ENCODE measurements at regions of chr1 and their contacts with region 1.

Region 1: GRCh38 chr1:28088168-28088961 is at the start of gene EYA3:
- DNase-seq: peak; percentile 98
- ATAC-seq: peak; percentile 94
- H3K4me3 ChIP-seq: peak within 1 kb of the TSS; percentile 94
- H3K27ac ChIP-seq: peak within 1 kb of the TSS; percentile 93
- H3K4me1 ChIP-seq: peaks cover 17% of the 10 kb centered on the region
- H3K27me3 ChIP-seq: no peaks in the 10 kb centered on the region
- CTCF ChIP-seq: no peak
- EP300 ChIP-seq: no peak
- POLR2A ChIP-seq: peak; percentile 86; the same call in 1 of the 2 replicates
- RAD21 ChIP-seq: no peak
- polyA plus RNA-seq, gene EYA3: 13.0 to 15.6 TPM

Region 2: DNA sequence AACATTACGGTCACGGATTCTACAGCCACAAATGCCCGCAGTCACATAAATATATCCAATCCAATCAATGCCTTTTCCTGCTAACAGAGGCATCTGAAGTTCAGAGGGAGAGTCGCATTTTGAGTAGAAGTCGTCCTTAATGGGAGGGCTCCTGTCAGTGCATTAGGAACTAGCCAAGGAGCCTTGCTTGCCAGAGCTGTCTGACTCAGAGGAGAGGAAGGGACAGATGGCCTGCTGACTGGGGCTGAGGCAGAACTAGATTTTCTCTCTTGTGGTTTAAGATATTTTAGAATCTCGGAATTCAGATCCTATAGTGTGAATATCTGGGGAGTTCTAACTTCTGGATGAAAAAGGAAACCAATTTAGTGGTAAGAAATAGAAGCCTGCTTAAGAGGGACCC is 118.0 kb before region 1 on chr1:
- CTCF ChIA-PET with region 1: no interaction called
- POLR2A ChIA-PET with region 1: no interaction called
- RAD21 ChIA-PET with region 1: no interaction called
- SMC1A ChIA-PET with region 1: no interaction called
- in situ Hi-C with region 1: no loop called
- intact Hi-C with region 1: no loop called
- DNase-seq: no peak
- ATAC-seq: no peak
- H3K4me3 ChIP-seq: no peak overlapping the region
- H3K27ac ChIP-seq: no peak overlapping the region
- H3K4me1 ChIP-seq: no peaks in the 10 kb centered on the region
- H3K27me3 ChIP-seq: no peaks in the 10 kb centered on the region
- CTCF ChIP-seq: no peak
- EP300 ChIP-seq: no peak
- POLR2A ChIP-seq: no peak
- RAD21 ChIP-seq: no peak

Region 3: GRCh38 chr1:28036431-28036830 is 51.9 kb before region 1 on chr1:
- CTCF ChIA-PET with region 1: interaction called, 13 read pairs
- POLR2A ChIA-PET with region 1: interaction called, 3 read pairs
- RAD21 ChIA-PET with region 1: interaction called, 12 read pairs
- SMC1A ChIA-PET with region 1: interaction called, 28 read pairs
- in situ Hi-C with region 1: no loop called
- intact Hi-C with region 1: no loop called
- DNase-seq: no peak
- ATAC-seq: no peak
- H3K4me3 ChIP-seq: no peak overlapping the region
- H3K27ac ChIP-seq: no peak overlapping the region
- H3K4me1 ChIP-seq: no peaks in the 10 kb centered on the region
- H3K27me3 ChIP-seq: no peaks in the 10 kb centered on the region
- CTCF ChIP-seq: peak in 1 of 3 experiments; percentile 49; a peak in 3 of 6 replicates
- EP300 ChIP-seq: no peak
- POLR2A ChIP-seq: no peak
- RAD21 ChIP-seq: peak; percentile 24; the same call in 1 of the 2 replicates

Region 4: GRCh38 chr1:28104866-28105467 is 16.6 kb after region 1 on chr1:
- CTCF ChIA-PET with region 1: interaction called, 57 read pairs
- POLR2A ChIA-PET with region 1: interaction called, 18 read pairs
- RAD21 ChIA-PET with region 1: interaction called, 113 read pairs
- SMC1A ChIA-PET with region 1: interaction called, 16 read pairs
- in situ Hi-C with region 1: no loop called
- intact Hi-C with region 1: no loop called
- DNase-seq: no peak
- ATAC-seq: no peak; the same call in 2 of the 3 replicates
- H3K4me3 ChIP-seq: no peak overlapping the region
- H3K27ac ChIP-seq: no peak overlapping the region
- H3K4me1 ChIP-seq: no peaks in the 10 kb centered on the region
- H3K27me3 ChIP-seq: no peaks in the 10 kb centered on the region
- CTCF ChIP-seq: no peak
- EP300 ChIP-seq: no peak
- POLR2A ChIP-seq: no peak
- RAD21 ChIP-seq: no peak

Region 5: GRCh38 chr1:28139025-28139712 is 50.8 kb after region 1 on chr1:
- CTCF ChIA-PET with region 1: interaction called, 54 read pairs
- POLR2A ChIA-PET with region 1: interaction called, 10 read pairs
- RAD21 ChIA-PET with region 1: interaction called, 33 read pairs
- SMC1A ChIA-PET with region 1: interaction called, 72 read pairs
- in situ Hi-C with region 1: no loop called
- intact Hi-C with region 1: loop called (anchors 1 kb)
- DNase-seq: no peak
- ATAC-seq: peak; percentile 47
- H3K4me3 ChIP-seq: no peak overlapping the region
- H3K27ac ChIP-seq: no peak overlapping the region
- H3K4me1 ChIP-seq: peaks cover 44% of the 10 kb centered on the region
- H3K27me3 ChIP-seq: no peaks in the 10 kb centered on the region
- CTCF ChIP-seq: no peak
- EP300 ChIP-seq: no peak
- POLR2A ChIP-seq: no peak
- RAD21 ChIP-seq: no peak

Region 6: DNA sequence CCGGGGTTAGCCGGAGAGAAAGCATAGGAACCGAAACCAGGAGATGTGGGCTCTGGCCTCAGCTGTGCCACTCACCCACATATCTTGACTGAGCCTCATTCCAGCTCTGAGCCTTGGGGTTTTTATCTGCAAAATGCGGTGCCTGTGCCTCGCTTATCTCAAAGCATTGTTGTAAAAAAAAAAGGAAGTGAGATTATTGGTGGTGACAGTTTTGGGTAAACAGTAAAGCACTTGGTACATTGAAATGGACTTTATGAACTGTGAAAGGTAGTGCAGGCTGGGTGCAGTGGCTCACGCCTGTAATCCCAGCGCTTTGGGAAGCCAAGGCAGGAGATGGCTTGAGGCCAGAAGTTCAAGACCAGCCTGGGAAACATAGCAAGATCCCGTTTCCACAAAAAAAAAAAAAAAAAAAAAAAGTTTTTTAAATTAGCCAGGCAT is 84.4 kb after region 1 on chr1:
- CTCF ChIA-PET with region 1: interaction called, 57 read pairs
- POLR2A ChIA-PET with region 1: interaction called, 28 read pairs
- RAD21 ChIA-PET with region 1: interaction called, 139 read pairs
- SMC1A ChIA-PET with region 1: interaction called, 101 read pairs
- in situ Hi-C with region 1: no loop called
- intact Hi-C with region 1: loop called (anchors 2 kb)
- DNase-seq: peak; percentile 98
- ATAC-seq: peak; percentile 59
- H3K4me3 ChIP-seq: 0 out of 2 replicates have a peak overlapping the region, but pooled peaks have one; percentile 30
- H3K27ac ChIP-seq: peak overlapping the region; percentile 69
- H3K4me1 ChIP-seq: peaks cover 82% of the 10 kb centered on the region
- H3K27me3 ChIP-seq: no peaks in the 10 kb centered on the region
- CTCF ChIP-seq: no peak
- EP300 ChIP-seq: peak; percentile 92 to 98
- POLR2A ChIP-seq: 0 out of 2 replicates have a peak, but pooled peaks have one; percentile 21
- RAD21 ChIP-seq: 0 out of 2 replicates have a peak, but pooled peaks have one; percentile 3

Region 7: DNA sequence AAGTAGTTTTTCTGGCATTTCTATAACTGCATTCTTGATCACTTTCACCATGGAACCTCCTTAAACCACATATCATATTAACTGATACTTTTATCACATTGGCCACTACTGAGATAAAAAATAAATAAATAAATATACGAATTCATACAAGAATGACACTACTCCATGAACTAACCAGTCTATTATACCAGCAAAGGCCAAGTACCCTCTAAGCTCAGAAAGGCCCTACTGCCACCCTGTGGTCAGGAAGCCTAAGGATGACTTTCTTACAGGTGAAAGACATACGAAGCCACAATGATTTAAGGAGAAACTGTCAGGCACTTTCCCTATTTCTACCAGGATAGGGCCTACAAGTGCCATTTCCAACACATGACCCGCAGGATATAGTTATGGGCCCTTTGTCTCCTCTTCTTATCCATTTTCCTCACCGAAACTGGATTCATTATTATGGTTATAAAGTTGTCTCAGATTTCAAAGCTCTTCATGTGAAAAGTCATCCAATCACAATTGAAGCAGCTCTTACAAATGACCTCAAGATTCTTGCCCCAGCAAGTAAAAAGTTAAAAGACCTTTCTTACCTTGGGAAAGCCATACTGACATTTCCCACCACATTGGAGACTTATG is 120.6 kb after region 1 on chr1:
- CTCF ChIA-PET with region 1: interaction called, 317 read pairs
- POLR2A ChIA-PET with region 1: interaction called, 15 read pairs
- RAD21 ChIA-PET with region 1: interaction called, 207 read pairs
- SMC1A ChIA-PET with region 1: interaction called, 445 read pairs
- in situ Hi-C with region 1: loop called (anchors 5 kb)
- intact Hi-C with region 1: loop called (anchors 1 kb)
- DNase-seq: peak; percentile 57
- ATAC-seq: peak; percentile 99
- H3K4me3 ChIP-seq: no peak overlapping the region
- H3K27ac ChIP-seq: no peak overlapping the region
- H3K4me1 ChIP-seq: no peaks in the 10 kb centered on the region
- H3K27me3 ChIP-seq: no peaks in the 10 kb centered on the region
- CTCF ChIP-seq: peak; percentile 72 to 92 (median 78); a peak in 5 of 6 replicates
- EP300 ChIP-seq: no peak
- POLR2A ChIP-seq: no peak
- RAD21 ChIP-seq: peak; percentile 99

Measured in GM12878 (cell line).